Mammary epithelial cell (primary cell): ENCODE measurements at regions of chr14 and their contacts with region 1.

Region 1: GRCh38 chr14:77151918-77152588 is 10.5 kb upstream of the ZDHHC22 start:
- DNase-seq: peak; percentile 20
- H3K4me3 ChIP-seq: no peak overlapping the region
- H3K27ac ChIP-seq: no peak overlapping the region
- H3K4me1 ChIP-seq: no peaks in the 10 kb centered on the region
- H3K27me3 ChIP-seq: no peaks in the 10 kb centered on the region
- CTCF ChIP-seq: peak; percentile 25 to 41

Region 2: GRCh38 chr14:77097700-77098528 is 54.1 kb before region 1 on chr14 and contains the start of gene CIPC:
- CTCF ChIA-PET with region 1: no interaction called
- dilution Hi-C with region 1: no loop called
- in situ Hi-C with region 1: no loop called
- intact Hi-C with region 1: loop called (anchors 2 kb)
- DNase-seq: peak; percentile 99
- H3K4me3 ChIP-seq: peak within 1 kb of the TSS; percentile 84 to 96 (median 91)
- H3K27ac ChIP-seq: peak within 1 kb of the TSS; percentile 93
- H3K4me1 ChIP-seq: peaks cover 18% of the 10 kb centered on the region
- H3K27me3 ChIP-seq: no peaks in the 10 kb centered on the region
- CTCF ChIP-seq: no peak
- total RNA-seq, gene CIPC: 11.6 to 30.2 TPM

Region 3: DNA sequence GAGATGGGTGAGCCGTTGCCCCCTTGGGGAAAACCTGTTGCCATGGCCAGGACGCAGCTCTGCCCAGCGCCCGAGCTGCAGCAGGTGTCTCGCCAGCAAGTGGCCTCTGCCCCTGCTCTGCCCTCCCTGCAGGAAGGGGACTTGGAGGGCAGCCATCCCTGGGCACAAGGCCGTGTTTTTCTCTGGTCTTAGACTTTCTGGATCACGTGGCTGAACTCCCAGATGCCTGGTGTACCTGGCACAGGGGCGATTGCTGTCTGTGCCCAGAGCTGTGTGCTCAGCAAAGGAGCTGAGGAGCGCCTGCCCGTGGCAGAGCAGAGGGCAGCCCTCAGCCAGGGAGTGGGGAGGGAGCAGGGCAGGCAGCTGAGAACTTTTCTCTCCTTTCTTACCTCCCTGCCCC is 67.5 kb after region 1 on chr14:
- CTCF ChIA-PET with region 1: no interaction called
- dilution Hi-C with region 1: no loop called
- in situ Hi-C with region 1: loop called in 1 of 2 experiments (anchors 5 kb)
- intact Hi-C with region 1: no loop called
- DNase-seq: no peak
- H3K4me3 ChIP-seq: no peak overlapping the region
- H3K27ac ChIP-seq: no peak overlapping the region
- H3K4me1 ChIP-seq: no peaks in the 10 kb centered on the region
- H3K27me3 ChIP-seq: peaks cover 3% of the 10 kb centered on the region
- CTCF ChIP-seq: no peak

Region 4: GRCh38 chr14:77314043-77314442 is 162.0 kb after region 1 on chr14:
- CTCF ChIA-PET with region 1: interaction called, 4 read pairs
- dilution Hi-C with region 1: no loop called
- in situ Hi-C with region 1: loop called in 1 of 2 experiments (anchors 10 kb)
- intact Hi-C with region 1: loop called (anchors 1 kb)
- DNase-seq: peak; percentile 93
- H3K4me3 ChIP-seq: no peak overlapping the region
- H3K27ac ChIP-seq: peak overlapping the region; percentile 31
- H3K4me1 ChIP-seq: peaks cover 45% of the 10 kb centered on the region
- H3K27me3 ChIP-seq: no peaks in the 10 kb centered on the region
- CTCF ChIP-seq: no peak

Region 5: GRCh38 chr14:77554207-77554606 is 402.2 kb after region 1 on chr14:
- CTCF ChIA-PET with region 1: no interaction called
- dilution Hi-C with region 1: no loop called
- in situ Hi-C with region 1: no loop called
- intact Hi-C with region 1: loop called (anchors 2 kb)
- DNase-seq: no peak
- H3K4me3 ChIP-seq: no peak overlapping the region
- H3K27ac ChIP-seq: no peak overlapping the region
- H3K4me1 ChIP-seq: no peaks in the 10 kb centered on the region
- H3K27me3 ChIP-seq: no peaks in the 10 kb centered on the region
- CTCF ChIP-seq: no peak